Brain microvascular endothelial cell (primary cell): ENCODE measurements at regions of chr5 and their contacts with region 1.

Region 1: GRCh38 chr5:6745706-6746222 is 32.5 kb downstream of the TENT4A start:
- DNase-seq: peak; percentile 58
- H3K4me3 ChIP-seq: no peak overlapping the region
- H3K27ac ChIP-seq: no peak overlapping the region
- H3K27me3 ChIP-seq: no peaks in the 10 kb centered on the region
- CTCF ChIP-seq: peak; percentile 67

Region 2: DNA sequence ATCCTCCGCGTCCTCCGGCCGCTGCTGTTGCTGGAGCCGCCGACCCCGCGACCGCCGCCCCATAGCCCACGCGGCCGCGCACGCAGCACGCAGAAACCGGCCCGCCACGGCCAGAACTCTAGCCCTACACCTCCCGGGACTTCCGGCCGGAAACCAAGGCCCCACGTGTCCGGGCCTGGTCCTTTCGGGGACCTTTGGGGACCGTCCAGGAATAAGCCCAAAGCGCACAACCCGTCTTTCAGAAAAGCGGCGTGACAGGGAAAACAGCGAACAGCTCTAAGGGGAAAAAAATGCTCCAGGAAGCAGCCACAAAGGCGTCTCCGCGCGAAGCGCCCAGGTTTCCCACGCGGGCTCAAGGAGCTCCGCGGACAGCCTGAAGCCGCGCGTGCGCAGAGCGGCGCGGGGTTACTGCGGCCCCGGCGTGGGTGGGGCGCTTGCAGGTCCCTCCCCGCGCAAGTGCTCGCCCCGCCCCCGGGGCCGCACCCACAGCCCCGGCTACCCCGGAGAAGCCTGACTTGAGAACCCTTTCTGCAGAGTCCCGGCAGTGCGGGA is 112.8 kb before region 1 on chr5 and contains the starts of genes NSUN2 and SRD5A1:
- in situ Hi-C with region 1: loop called (anchors 25 kb)
- DNase-seq: peak; percentile 77
- H3K4me3 ChIP-seq: peak within 1 kb of the TSS; percentile 71
- H3K27ac ChIP-seq: peak within 1 kb of the TSS; percentile 99
- H3K27me3 ChIP-seq: no peaks in the 10 kb centered on the region
- CTCF ChIP-seq: no peak